ENCODE measurements at regions of chr10 and their contacts with region 1.

Region 1: DNA sequence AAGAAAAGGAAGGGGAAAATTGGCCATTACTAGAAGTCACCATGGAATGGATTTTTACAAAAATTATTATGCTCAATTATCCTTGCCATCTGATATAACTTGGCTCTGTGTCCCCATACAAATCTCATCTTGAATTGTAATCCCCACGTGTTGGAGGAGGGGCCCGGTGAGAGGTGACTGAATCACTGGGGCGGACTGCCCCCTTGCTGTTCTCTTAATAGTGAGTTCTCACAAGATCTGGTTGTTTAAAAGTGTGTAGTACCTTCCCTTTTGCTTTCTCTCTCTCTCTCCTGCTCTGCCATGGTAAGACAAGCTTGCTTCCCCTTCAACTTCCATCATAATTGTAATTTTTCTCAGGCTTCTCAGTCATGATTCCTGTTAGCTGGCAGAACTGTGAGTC is 1023.6 kb downstream of the XPNPEP1 start:
- DNase-seq: no peak
- ATAC-seq: no peak
- H3K4me3 ChIP-seq: no peak overlapping the region
- H3K27ac ChIP-seq: no peak overlapping the region
- H3K4me1 ChIP-seq: no peaks in the 10 kb centered on the region
- H3K27me3 ChIP-seq: no peaks in the 10 kb centered on the region
- CTCF ChIP-seq: no peak

Region 2: GRCh38 chr10:108404155-108404554 is 495.5 kb before region 1 on chr10:
- CTCF ChIA-PET with region 1: no interaction called
- POLR2A ChIA-PET with region 1: no interaction called
- intact Hi-C with region 1: no loop called
- DNase-seq: no peak
- ATAC-seq: no peak
- H3K4me3 ChIP-seq: no peak overlapping the region
- H3K27ac ChIP-seq: no peak overlapping the region
- H3K4me1 ChIP-seq: no peaks in the 10 kb centered on the region
- H3K27me3 ChIP-seq: no peaks in the 10 kb centered on the region
- CTCF ChIP-seq: no peak

Region 3: DNA sequence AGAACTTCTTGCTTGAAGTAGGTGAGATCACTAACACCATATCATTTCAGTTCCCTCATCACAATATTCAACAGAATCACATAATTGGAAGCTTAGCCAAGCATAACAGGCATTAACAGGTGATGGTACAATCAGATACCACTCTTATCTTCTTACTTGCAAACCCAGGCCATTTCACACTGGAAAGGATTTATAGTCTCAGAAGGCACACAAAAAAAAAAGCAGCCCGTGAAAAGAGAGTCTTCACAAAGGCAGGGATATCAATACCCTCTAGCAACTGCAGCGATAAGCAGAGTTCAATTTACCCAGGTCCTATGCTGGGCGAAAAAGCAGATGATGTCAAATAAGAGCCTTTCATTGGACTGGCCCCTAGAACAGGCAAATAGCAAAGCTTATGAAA is 58.7 kb before region 1 on chr10:
- CTCF ChIA-PET with region 1: no interaction called
- POLR2A ChIA-PET with region 1: no interaction called
- intact Hi-C with region 1: no loop called
- DNase-seq: no peak
- ATAC-seq: no peak
- H3K4me3 ChIP-seq: no peak overlapping the region
- H3K27ac ChIP-seq: no peak overlapping the region
- H3K4me1 ChIP-seq: 0 out of 2 replicates have a peak, but pooled peaks cover 4% of the 10 kb centered on the region
- H3K27me3 ChIP-seq: no peaks in the 10 kb centered on the region
- CTCF ChIP-seq: no peak

Region 4: DNA sequence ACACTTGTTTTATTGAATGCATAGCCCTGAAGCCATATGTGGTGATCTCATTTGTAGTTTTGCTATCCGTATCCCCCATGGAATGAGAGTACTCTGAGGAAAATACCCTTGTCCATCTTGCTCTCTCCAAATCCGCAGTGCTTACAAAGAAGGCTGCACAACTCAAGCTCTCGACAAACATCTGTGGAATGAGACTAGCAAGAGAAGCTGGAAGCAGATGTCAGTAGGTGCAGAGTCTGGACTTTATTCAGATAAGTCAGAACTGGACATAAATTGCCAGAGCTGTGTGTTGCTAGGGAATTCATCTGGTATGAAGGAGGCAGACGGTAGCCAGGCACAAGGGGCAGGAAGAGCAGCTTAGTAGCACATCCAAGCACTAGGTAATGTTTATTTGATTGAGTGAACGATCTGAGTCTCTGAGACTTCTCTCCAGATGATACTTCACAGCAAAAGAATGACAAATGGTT is 22.5 kb before region 1 on chr10:
- CTCF ChIA-PET with region 1: no interaction called
- POLR2A ChIA-PET with region 1: no interaction called
- intact Hi-C with region 1: loop called (anchors 1 kb)
- DNase-seq: no peak
- ATAC-seq: no peak; the same call in 1 of the 2 replicates
- H3K4me3 ChIP-seq: no peak overlapping the region
- H3K27ac ChIP-seq: no peak overlapping the region
- H3K4me1 ChIP-seq: no peaks in the 10 kb centered on the region
- H3K27me3 ChIP-seq: no peaks in the 10 kb centered on the region
- CTCF ChIP-seq: no peak

Region 5: GRCh38 chr10:110016039-110016438 is 1116.4 kb after region 1 on chr10:
- CTCF ChIA-PET with region 1: no interaction called
- POLR2A ChIA-PET with region 1: no interaction called
- intact Hi-C with region 1: no loop called
- DNase-seq: peak; percentile 19
- ATAC-seq: peak; percentile 57; the same call in 1 of the 2 replicates
- H3K4me3 ChIP-seq: no peak overlapping the region
- H3K27ac ChIP-seq: no peak overlapping the region
- H3K4me1 ChIP-seq: peaks cover 22% of the 10 kb centered on the region
- H3K27me3 ChIP-seq: no peaks in the 10 kb centered on the region
- CTCF ChIP-seq: peak; percentile 48

Measured in PC-3 (cell line).